ENCODE measurements at regions of chr2 and their contacts with region 1.

Region 1: DNA sequence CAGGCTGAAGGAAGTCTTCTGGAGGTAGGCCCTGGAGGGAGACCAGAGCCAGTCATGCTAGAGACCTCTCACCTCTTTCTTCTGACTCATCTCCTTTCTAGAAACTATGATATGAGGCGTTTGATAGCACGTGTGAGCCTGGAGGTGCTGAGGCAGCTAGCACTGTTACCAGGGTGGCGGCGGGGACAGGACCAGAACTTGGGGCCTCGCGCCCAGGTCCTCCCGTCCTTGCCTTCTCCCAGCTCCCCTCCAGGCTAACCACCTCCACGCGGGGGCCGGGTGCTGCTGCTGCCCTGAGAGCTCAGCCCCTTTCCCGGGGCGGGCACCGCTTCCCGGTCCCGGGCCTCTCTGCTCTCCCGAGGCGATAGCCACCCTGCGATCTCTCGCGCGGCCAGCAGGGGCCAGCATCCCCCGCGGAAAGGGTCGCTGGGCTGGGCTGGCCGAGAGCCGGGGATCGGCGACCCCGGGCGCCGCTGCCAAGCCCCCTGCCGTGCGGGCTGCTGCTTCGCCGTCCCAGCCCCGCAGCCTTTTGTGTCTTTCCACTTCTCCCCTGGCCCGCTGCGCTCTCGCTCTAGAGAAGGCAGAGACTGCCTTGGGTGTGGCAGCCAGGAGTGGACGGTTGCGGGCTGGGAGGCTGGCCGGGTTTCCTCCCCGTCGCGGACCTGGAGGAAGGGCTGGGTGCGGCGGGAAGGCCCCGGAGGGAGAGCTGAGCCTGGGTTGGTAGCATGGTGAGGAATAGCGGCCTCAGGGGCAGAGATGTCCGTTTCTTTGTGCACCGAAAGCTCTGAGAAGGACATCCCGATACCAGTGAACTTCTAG is 49.1 kb downstream of the TMEM17 start:
- DNase-seq: peak; percentile 48
- ATAC-seq: peak; percentile 98
- H3K4me3 ChIP-seq: peak overlapping the region; percentile 58 to 63
- H3K27ac ChIP-seq: peak overlapping the region; percentile 80
- H3K4me1 ChIP-seq: peaks cover 5% of the 10 kb centered on the region
- H3K27me3 ChIP-seq: no peaks in the 10 kb centered on the region
- CTCF ChIP-seq: peak; percentile 96

Region 2: DNA sequence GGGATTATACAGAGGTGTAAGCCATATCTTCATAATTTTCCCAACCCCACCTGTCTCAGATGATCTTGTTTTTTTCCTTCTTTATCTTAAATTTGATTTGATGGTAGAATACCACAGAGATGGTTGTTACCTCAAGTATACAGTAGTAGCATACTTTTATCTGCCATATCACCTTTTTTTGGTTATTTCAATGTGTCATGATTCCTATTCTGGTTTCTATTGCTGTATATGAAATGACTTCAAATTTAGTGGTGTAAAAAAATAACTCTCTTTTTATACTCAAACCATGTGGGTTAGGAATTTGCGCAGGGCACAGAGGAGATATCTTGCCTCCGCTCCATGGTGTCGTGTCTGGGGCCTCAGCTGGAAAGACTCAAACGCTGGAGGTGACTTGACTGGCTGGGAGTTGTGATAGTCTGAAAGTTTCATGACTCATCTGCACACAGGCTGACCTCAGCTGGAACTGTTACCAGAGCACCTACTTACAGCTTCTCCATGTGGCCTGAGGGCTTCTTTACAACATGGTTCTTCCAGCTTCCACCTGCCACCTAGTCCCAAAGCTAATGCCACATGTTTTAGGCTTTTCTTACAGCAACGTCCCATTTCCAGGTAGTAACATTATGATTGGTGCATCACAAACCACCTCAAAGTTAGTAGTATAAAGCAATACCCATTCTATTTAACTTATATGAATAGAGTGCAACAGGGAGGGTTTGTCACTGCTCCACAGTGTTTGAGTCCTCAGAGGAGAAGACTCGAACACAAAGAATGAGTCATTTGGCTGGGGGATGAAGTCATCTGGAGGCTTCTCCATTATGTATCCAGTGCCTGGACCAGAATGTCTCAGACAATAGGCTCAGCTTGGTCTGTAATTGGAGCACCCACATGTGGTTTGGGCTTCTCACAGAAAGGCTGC is 836.4 kb before region 1 on chr2:
- CTCF ChIA-PET with region 1: no interaction called
- POLR2A ChIA-PET with region 1: no interaction called
- in situ Hi-C with region 1: no loop called
- intact Hi-C with region 1: no loop called
- DNase-seq: peak; percentile 50
- ATAC-seq: peak; percentile 81
- H3K4me3 ChIP-seq: no peak overlapping the region
- H3K27ac ChIP-seq: no peak overlapping the region
- H3K4me1 ChIP-seq: no peaks in the 10 kb centered on the region
- H3K27me3 ChIP-seq: no peaks in the 10 kb centered on the region
- CTCF ChIP-seq: no peak

Region 3: DNA sequence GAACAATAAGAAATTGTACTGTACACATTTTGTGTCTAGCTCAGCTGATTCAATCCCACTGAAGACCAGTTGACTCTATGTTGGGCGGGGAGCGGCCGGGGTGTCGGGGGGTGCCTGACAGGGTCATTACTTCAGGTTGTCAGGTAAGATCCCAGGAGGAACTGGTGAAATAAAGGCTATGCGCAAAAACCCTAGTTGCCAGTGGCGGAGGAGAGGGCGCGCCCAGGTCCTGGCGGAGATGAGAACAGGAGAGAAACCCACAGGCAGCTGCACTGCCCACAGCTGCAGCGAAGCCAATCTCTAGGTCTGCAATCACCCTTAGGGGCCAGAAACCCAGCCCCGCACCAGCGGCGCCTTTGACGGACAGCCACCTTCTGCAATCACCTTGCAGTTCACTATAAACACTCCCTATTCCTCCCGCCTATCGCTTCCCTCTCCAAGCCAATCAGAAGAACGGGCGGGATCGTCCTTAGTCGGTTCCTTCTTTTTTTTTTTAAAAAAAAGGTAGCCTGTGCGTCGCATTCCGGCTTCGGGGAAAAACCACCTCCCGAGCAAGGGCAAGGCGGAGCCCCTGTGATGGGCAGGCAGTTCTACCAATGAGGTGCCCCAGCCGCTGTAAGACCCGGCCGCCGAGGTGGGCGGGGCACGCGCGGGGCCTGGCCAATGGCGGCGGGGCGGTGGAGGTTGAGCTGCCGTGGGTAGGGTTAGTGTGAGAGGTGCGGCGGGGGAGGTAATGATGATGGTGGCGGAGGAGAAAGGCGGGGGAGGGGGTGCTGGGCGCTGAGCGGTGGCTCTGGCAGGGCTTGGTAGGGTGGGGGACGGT is 248.3 kb after region 1 on chr2 and contains the start of gene EHBP1:
- CTCF ChIA-PET with region 1: no interaction called
- POLR2A ChIA-PET with region 1: no interaction called
- in situ Hi-C with region 1: no loop called
- intact Hi-C with region 1: loop called (anchors 5 kb)
- DNase-seq: peak; percentile 98
- ATAC-seq: peak; percentile 97
- H3K4me3 ChIP-seq: peak within 1 kb of the TSS; percentile 71 to 82
- H3K27ac ChIP-seq: peak within 1 kb of the TSS; percentile 89
- H3K4me1 ChIP-seq: peaks cover 19% of the 10 kb centered on the region
- H3K27me3 ChIP-seq: no peaks in the 10 kb centered on the region
- CTCF ChIP-seq: no peak
- total RNA-seq, gene EHBP1: 46.1 TPM

Region 4: DNA sequence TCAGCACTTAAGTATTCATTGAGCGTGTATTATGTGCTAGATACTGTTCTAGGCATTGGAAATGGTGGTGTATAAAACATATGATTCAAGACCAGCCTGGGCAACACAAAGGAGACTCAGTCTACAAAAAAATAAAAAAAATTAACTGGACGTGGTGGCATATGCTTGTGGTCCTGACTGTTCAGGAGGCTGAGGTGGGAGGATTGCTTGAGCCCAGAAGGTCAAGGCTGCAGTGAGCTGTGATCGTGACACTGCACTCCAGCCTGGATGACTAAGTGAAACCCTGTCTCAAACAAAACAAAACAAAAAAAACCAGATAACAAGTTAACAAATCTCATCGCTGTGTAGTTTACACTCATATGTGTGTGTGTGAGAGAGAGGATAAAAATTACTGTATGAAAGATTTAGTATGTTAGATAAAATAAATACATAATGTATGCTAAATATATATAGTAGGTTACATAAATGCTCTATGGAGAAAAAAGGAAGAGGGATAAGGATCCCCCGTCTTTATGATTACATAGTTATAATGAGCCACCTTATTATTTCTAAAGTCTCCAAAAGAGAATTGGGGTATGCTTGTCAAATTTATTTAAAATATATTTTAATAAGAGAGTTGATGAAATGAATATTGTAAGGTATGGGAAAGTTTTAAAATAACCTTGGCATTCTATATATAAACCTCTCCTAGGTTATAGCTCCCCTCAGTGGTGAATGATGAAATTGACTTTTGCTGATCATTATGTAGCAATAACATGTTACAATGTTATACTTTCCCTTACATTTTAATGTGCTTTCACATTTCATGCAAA is 317.8 kb after region 1 on chr2:
- CTCF ChIA-PET with region 1: interaction called, 17 read pairs
- POLR2A ChIA-PET with region 1: interaction called, 11 read pairs
- in situ Hi-C with region 1: no loop called
- intact Hi-C with region 1: loop called (anchors 1 kb)
- DNase-seq: peak; percentile 48
- ATAC-seq: peak; percentile 90
- H3K4me3 ChIP-seq: no peak overlapping the region
- H3K27ac ChIP-seq: no peak overlapping the region
- H3K4me1 ChIP-seq: no peaks in the 10 kb centered on the region; the same call in 1 of the 2 replicates
- H3K27me3 ChIP-seq: no peaks in the 10 kb centered on the region
- CTCF ChIP-seq: peak; percentile 77; the same call in 1 of the 2 replicates